ENCODE measurements at regions of chrX and their contacts with region 1.

Region 1: GRCh38 chrX:53683556-53684414 is 2.7 kb downstream of the HUWE1 start:
- DNase-seq: peak; percentile 81 to 90
- H3K4me3 ChIP-seq: peak overlapping the region; percentile 69 to 98 (median 82)
- H3K27ac ChIP-seq: peak overlapping the region; percentile 98
- H3K4me1 ChIP-seq: peaks cover 0 to 6% (median 0%) of the 10 kb centered on the region in 4 experiments; a peak in 1 of 7 replicates
- H3K27me3 ChIP-seq: no peaks in the 10 kb centered on the region
- CTCF ChIP-seq: no peak
- EP300 ChIP-seq: no peak
- POLR2A ChIP-seq: peak; percentile 52 to 81
- RAD21 ChIP-seq: no peak

Region 2: DNA sequence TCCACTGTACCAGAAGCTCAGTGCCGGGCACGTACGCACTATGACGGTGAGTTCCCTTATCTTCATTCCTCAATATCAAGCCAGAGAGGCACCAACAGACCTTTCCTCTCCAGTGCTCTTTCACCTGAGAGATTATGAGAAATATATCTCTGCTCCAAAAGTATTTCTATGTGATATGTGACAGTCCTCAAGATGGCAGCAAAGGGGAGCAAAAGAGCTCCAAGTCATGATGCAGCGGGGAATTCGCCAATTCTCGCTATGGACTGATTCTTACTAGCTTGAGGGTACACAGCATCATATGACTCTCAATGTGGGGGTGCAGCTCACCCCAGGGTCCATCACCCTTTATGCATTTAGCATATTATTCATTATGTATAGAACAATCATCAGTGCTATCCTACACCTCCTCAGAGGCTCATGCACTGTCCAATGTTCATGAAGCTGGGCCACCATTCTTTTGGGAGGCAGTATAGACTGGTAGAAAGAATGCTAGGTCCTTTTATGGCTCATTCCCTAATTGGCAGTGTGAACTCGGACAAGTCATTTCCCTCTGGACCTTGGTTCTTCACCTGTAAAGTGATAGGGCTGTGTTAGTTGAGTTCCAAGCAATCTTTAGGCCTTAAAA is 389.6 kb before region 1 on chrX:
- CTCF ChIA-PET with region 1: no interaction called
- POLR2A ChIA-PET with region 1: no interaction called
- DNase-seq: no peak
- H3K4me3 ChIP-seq: no peak overlapping the region
- H3K27ac ChIP-seq: no peak overlapping the region
- H3K4me1 ChIP-seq: no peaks in the 10 kb centered on the region; a peak in 2 of 7 replicates
- H3K27me3 ChIP-seq: no peaks in the 10 kb centered on the region
- CTCF ChIP-seq: peak in 2 of 3 experiments; percentile 28 to 29; a peak in 3 of 4 replicates
- EP300 ChIP-seq: no peak
- POLR2A ChIP-seq: no peak
- RAD21 ChIP-seq: peak; percentile 47 to 61; a peak in 3 of 4 replicates

Region 3: GRCh38 chrX:53704294-53704693 is 20.5 kb after region 1 on chrX:
- CTCF ChIA-PET with region 1: no interaction called
- POLR2A ChIA-PET with region 1: interaction called, 10 read pairs
- DNase-seq: no peak
- H3K4me3 ChIP-seq: no peak overlapping the region
- H3K27ac ChIP-seq: no peak overlapping the region
- H3K4me1 ChIP-seq: no peaks in the 10 kb centered on the region
- H3K27me3 ChIP-seq: no peaks in the 10 kb centered on the region
- CTCF ChIP-seq: no peak
- EP300 ChIP-seq: no peak
- POLR2A ChIP-seq: no peak
- RAD21 ChIP-seq: no peak

Region 4: GRCh38 chrX:53714580-53715345 is 31.0 kb after region 1 on chrX:
- CTCF ChIA-PET with region 1: interaction called, 4 read pairs
- POLR2A ChIA-PET with region 1: interaction called, 45 read pairs
- DNase-seq: no peak
- H3K4me3 ChIP-seq: no peak overlapping the region
- H3K27ac ChIP-seq: no peak overlapping the region
- H3K4me1 ChIP-seq: peaks cover 0 to 2% (median 0%) of the 10 kb centered on the region in 4 experiments; a peak in 1 of 7 replicates
- H3K27me3 ChIP-seq: no peaks in the 10 kb centered on the region
- CTCF ChIP-seq: no peak
- EP300 ChIP-seq: no peak
- POLR2A ChIP-seq: no peak
- RAD21 ChIP-seq: peak in 1 of 2 experiments; percentile 9; a peak in 1 of 4 replicates

Region 5: DNA sequence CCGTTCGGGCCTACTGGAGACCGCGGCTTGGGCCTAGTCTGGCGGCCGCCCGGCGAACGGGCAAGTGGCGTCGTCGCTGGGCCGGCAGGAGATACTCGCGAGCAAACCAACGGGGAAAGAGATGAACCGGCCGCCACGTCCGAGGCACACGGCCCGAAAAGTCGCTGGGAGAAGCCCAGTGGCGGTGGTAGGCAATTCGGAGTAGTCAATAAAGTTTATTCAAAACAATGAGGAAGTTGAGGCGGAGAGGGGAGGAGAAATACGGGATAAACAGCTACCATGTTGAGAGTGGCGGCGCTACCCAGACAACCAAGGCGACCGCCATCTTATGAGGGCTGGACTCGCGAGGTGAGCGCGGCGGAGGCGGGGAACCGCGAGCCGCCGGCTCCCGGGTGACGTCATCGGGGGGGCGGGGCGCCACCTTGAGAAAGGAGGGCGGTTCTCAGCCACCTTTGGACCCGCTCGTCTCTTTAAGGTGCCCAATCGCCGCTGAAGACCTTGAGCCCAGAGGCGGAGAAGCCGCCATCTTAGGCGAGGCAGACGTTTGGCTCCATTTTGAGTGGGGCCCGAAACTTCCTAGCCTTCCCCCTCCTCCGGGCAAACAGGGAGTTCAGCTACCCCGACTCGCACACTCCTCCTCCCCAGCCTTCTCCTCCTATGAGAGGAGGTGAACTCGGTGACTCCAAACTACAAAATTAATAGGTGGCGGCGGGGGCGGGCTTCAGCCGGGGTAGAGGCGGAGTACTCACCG is 360.5 kb after region 1 on chrX and contains the start of gene PHF8:
- CTCF ChIA-PET with region 1: interaction called, 3 read pairs
- POLR2A ChIA-PET with region 1: interaction called, 13 read pairs
- DNase-seq: peak; percentile 86 to 92
- H3K4me3 ChIP-seq: peak within 1 kb of the TSS; percentile 72 to 90 (median 78)
- H3K27ac ChIP-seq: peak within 1 kb of the TSS; percentile 91
- H3K4me1 ChIP-seq: peaks cover 1 to 7% (median 4%) of the 10 kb centered on the region in 4 experiments; a peak in 3 of 7 replicates
- H3K27me3 ChIP-seq: no peaks in the 10 kb centered on the region
- CTCF ChIP-seq: no peak
- EP300 ChIP-seq: no peak
- POLR2A ChIP-seq: peak; percentile 49 to 59
- RAD21 ChIP-seq: no peak
- total RNA-seq, gene PHF8: 27.6 and 29.8 TPM in 2 replicates